ENCODE measurements at regions of chr18 and their contacts with region 1.

Region 1: DNA sequence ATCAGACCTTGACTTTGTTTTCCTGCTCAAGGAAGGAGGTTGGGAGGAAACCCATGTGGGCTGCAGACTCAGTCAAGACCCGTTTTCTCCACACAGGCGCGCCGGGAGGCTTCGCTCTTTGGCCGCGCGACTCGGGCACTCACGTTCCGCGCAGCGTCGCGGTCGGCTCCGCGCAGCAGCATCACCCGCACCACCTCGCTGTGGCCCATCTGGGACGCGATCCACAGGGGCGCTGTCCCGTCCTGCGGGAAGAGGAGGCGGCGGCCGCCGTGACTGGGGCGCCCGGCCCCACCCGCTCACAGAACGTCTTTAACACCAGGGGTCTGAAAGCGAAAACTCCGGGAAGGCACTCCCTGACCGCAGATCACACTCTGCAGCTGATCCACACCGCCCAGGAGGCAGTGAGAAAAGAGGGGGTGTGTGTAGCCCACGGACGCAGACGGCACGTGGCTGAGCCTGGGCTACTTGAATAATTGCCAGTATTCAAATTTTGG is 33.1 kb upstream of the NPC1 start:
- DNase-seq: no peak
- ATAC-seq: no peak
- H3K4me3 ChIP-seq: no peak overlapping the region
- H3K27ac ChIP-seq: no peak overlapping the region
- H3K4me1 ChIP-seq: no peaks in the 10 kb centered on the region
- H3K27me3 ChIP-seq: no peaks in the 10 kb centered on the region
- CTCF ChIP-seq: no peak
- POLR2A ChIP-seq: no peak
- RAD21 ChIP-seq: no peak

Region 2: DNA sequence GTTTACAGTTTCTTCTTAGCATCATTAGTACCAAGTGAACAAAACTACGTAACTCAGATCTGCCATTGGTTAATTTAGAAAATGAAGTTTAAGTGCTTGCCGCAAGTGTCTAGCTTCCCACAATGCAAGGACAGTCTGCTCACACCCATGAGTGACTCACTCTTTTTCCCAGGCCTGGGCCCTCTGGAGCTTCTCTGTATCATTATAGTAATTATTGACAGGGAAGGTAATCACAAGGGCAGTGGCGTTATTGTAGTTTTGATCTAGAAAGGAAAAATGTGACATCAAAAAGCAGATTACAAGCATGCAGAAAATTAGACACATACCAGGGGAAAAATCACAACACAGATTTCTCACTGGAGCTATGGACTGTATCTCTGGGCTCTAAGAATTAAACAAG is 71.6 kb before region 1 on chr18:
- CTCF ChIA-PET with region 1: no interaction called
- POLR2A ChIA-PET with region 1: no interaction called
- RAD21 ChIA-PET with region 1: no interaction called
- intact Hi-C with region 1: no loop called
- DNase-seq: peak; percentile 19
- ATAC-seq: peak; percentile 85
- H3K4me3 ChIP-seq: no peak overlapping the region
- H3K27ac ChIP-seq: peak overlapping the region; percentile 44; the same call in 1 of the 2 replicates
- H3K4me1 ChIP-seq: peaks cover 18 to 33% of the 10 kb centered on the region in 2 experiments
- H3K27me3 ChIP-seq: no peaks in the 10 kb centered on the region
- CTCF ChIP-seq: no peak
- POLR2A ChIP-seq: no peak
- RAD21 ChIP-seq: no peak

Region 3: GRCh38 chr18:23658296-23658695 is 38.9 kb after region 1 on chr18:
- CTCF ChIA-PET with region 1: interaction called, 5 read pairs
- POLR2A ChIA-PET with region 1: no interaction called
- RAD21 ChIA-PET with region 1: interaction called in 1 of 2 experiments, 3 read pairs
- intact Hi-C with region 1: loop called (anchors 2 kb)
- DNase-seq: no peak
- ATAC-seq: no peak
- H3K4me3 ChIP-seq: no peak overlapping the region
- H3K27ac ChIP-seq: no peak overlapping the region
- H3K4me1 ChIP-seq: peaks cover 3 to 14% of the 10 kb centered on the region in 2 experiments; a peak in 2 of 4 replicates
- H3K27me3 ChIP-seq: no peaks in the 10 kb centered on the region
- CTCF ChIP-seq: no peak
- POLR2A ChIP-seq: no peak
- RAD21 ChIP-seq: no peak

Measured in HCT116 (cell line).